ENCODE measurements at regions of chr3 and their contacts with region 1.

Region 1: DNA sequence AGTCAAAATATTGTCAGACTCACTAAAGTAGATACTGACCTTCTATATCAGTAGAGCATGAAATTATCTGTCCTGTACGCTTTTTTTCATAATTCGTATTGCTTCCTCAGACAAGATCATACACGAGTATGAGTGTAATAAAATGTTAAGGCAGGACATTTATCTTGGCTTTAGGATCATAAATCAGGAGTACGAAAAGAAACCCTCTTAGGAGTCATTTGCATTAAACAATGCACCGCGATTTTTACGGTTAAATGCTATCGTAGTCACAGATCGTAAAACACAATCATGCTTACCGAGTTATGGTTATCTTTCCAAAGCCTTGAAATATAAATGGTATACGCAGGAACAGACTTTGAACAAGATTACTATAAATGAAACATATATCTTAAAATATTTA is 510.3 kb upstream of the ROBO1 start:
- DNase-seq: no peak
- H3K4me3 ChIP-seq: no peak overlapping the region
- CTCF ChIP-seq: no peak
- POLR2A ChIP-seq: no peak

Region 2: GRCh38 chr3:78867409-78868372 is 1410.4 kb before region 1 on chr3:
- intact Hi-C with region 1: no loop called
- DNase-seq: no peak
- H3K4me3 ChIP-seq: no peak overlapping the region
- CTCF ChIP-seq: no peak
- POLR2A ChIP-seq: no peak

Region 3: GRCh38 chr3:80213086-80213485 is 65.0 kb before region 1 on chr3:
- intact Hi-C with region 1: loop called (anchors 10 kb)
- DNase-seq: no peak
- H3K4me3 ChIP-seq: no peak overlapping the region
- CTCF ChIP-seq: no peak
- POLR2A ChIP-seq: no peak

Measured in lower leg skin (tissue), 4 donors.